ENCODE measurements at regions of chr17 and their contacts with region 1.

Region 1: GRCh38 chr17:58417300-58418092 is at the start of gene RNF43:
- DNase-seq: peak; percentile 87
- H3K4me3 Mint-ChIP-seq: peak within 1 kb of the TSS; percentile 84
- H3K27ac Mint-ChIP-seq: peak within 1 kb of the TSS; percentile 79
- H3K4me1 Mint-ChIP-seq: peaks cover 46% of the 10 kb centered on the region
- H3K27me3 Mint-ChIP-seq: no peaks in the 10 kb centered on the region
- total RNA-seq, gene RNF43: 20.5 and 23.9 TPM in 2 replicates

Region 2: GRCh38 chr17:58303971-58304725 is 113.3 kb before region 1 on chr17:
- intact Hi-C with region 1: loop called (anchors 1 kb)
- DNase-seq: no peak
- H3K4me3 Mint-ChIP-seq: no peak overlapping the region
- H3K27ac Mint-ChIP-seq: no peak overlapping the region
- H3K4me1 Mint-ChIP-seq: no peaks in the 10 kb centered on the region
- H3K27me3 Mint-ChIP-seq: peaks cover 6% of the 10 kb centered on the region

Region 3: DNA sequence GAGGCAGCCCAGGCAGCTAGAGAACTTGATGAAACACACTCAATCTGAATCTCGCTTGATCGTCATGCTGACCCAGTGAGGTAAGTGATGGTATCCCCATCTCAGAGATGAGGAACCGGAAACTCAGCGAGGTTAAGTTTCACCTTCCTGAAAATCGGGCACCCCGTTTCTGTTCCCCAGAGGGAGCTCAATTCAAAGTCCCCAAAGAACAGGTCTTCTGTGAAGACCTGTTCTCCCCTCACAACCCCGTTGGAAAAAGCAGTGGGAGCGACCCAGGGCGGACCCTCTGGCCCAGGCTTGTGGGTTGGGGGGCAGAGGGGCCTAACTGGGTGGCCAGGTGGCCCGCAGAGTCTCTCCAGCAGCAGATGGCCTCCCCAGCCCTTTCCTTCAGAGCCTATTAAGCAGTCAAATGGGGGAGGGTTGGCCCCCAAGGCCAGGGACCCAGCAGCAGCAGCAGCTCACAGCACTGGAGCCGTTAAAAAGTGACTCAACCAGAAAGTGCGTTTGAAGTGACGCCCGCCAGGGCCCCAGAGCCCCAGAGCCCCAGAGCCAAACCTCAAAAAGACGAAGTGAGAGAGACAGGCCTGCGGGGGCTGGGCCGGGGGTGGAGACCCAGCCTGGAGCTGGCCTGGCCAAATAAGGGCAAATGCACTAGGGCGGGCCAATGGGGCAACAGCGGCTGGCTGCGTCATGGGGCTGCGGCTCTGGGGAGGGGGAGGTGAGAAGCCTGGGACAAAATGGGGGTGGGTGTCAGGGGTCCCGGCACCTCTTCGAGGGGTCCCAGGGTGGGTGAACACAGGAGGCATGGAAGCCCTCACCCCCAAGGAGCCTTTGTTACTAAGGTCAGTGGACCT is 79.7 kb before region 1 on chr17:
- intact Hi-C with region 1: loop called (anchors 1 kb)
- DNase-seq: peak; percentile 93
- H3K4me3 Mint-ChIP-seq: peak overlapping the region; percentile 99
- H3K27ac Mint-ChIP-seq: peak overlapping the region; percentile 99
- H3K4me1 Mint-ChIP-seq: peaks cover 35% of the 10 kb centered on the region
- H3K27me3 Mint-ChIP-seq: no peaks in the 10 kb centered on the region

Region 4: DNA sequence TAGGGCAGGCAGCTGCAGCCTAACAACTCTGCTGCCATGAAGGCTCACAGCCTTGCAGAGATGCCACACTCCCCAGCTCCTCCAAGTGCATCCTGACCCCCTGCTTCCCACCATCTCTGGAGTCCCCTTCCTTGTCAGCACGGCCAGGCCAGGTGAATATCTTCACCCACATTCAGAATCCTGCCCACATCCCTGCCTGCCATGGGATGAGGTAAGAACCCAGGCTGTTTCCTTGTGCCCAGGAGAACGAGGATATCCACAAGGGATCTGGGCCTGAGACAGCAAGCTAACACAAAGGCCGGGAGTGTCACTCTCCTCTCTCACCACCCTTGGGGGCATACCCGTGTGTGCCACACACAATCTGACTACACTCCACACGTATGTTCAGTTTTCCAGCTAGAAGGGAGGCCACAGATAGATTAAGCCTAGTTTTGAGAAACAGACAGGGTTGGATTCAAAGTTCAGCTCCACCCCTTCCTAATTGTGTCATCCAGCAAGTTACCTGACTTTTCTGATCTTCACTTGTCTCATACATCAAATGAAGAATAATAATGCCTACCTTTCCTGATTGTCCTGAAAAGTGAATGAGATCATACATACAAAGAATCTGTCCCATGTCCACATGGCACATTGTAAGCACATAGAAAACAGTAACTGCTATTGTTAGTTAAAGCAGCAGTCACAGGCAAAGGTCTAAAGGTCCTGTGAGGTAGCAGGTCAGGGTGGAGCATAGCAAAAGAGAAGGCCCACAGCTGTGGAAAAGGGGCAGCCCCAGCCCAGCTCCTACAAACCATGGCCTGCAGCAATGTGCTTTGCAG is 48.1 kb before region 1 on chr17:
- intact Hi-C with region 1: no loop called
- DNase-seq: no peak
- H3K4me3 Mint-ChIP-seq: no peak overlapping the region
- H3K27ac Mint-ChIP-seq: no peak overlapping the region
- H3K4me1 Mint-ChIP-seq: peaks cover 4% of the 10 kb centered on the region
- H3K27me3 Mint-ChIP-seq: no peaks in the 10 kb centered on the region

Region 5: GRCh38 chr17:58382108-58382871 is 35.2 kb before region 1 on chr17:
- intact Hi-C with region 1: loop called (anchors 1 kb)
- DNase-seq: peak; percentile 22
- H3K4me3 Mint-ChIP-seq: peak overlapping the region; percentile 9
- H3K27ac Mint-ChIP-seq: peak overlapping the region; percentile 66
- H3K4me1 Mint-ChIP-seq: peaks cover 71% of the 10 kb centered on the region
- H3K27me3 Mint-ChIP-seq: no peaks in the 10 kb centered on the region

Region 6: GRCh38 chr17:59361916-59362810 is 944.7 kb after region 1 on chr17:
- intact Hi-C with region 1: loop called (anchors 10 kb)
- DNase-seq: peak; percentile 49
- H3K4me3 Mint-ChIP-seq: peak overlapping the region; percentile 72
- H3K27ac Mint-ChIP-seq: peak overlapping the region; percentile 95
- H3K4me1 Mint-ChIP-seq: peaks cover 65% of the 10 kb centered on the region
- H3K27me3 Mint-ChIP-seq: no peaks in the 10 kb centered on the region

Measured in activated T-helper 2 cell treated with anti-CD3 and anti-CD28 coated beads, Interferon-gamma antibody, Interleukin-2, Interleukin-4, amounts not matched to agents 10 μg/mL and 5 μg/mL and 100 μg/mL, durations not matched to agents 14 hours and 24 hours and 36 hours (primary cell).